ENCODE measurements at regions of chr11 and their contacts with region 1.

Region 1: GRCh38 chr11:36478700-36479329 is 31.3 kb downstream of the TRAF6 start:
- DNase-seq: peak; percentile 76
- ATAC-seq: peak; percentile 56
- H3K4me3 ChIP-seq: no peak overlapping the region
- H3K27ac ChIP-seq: no peak overlapping the region
- H3K4me1 ChIP-seq: no peaks in the 10 kb centered on the region
- H3K27me3 ChIP-seq: no peaks in the 10 kb centered on the region
- CTCF ChIP-seq: peak; percentile 84

Region 2: GRCh38 chr11:36131721-36132397 is 347.0 kb before region 1 on chr11:
- CTCF ChIA-PET with region 1: no interaction called
- POLR2A ChIA-PET with region 1: interaction called, 25 read pairs
- intact Hi-C with region 1: no loop called
- DNase-seq: peak; percentile 29
- ATAC-seq: peak; percentile 69
- H3K4me3 ChIP-seq: no peak overlapping the region
- H3K27ac ChIP-seq: no peak overlapping the region
- H3K4me1 ChIP-seq: peaks cover 11% of the 10 kb centered on the region
- H3K27me3 ChIP-seq: no peaks in the 10 kb centered on the region
- CTCF ChIP-seq: peak; percentile 68

Region 3: GRCh38 chr11:36292311-36292722 is 186.5 kb before region 1 on chr11:
- CTCF ChIA-PET with region 1: interaction called, 11 read pairs
- POLR2A ChIA-PET with region 1: no interaction called
- intact Hi-C with region 1: loop called (anchors 1 kb)
- DNase-seq: peak; percentile 67
- ATAC-seq: no peak
- H3K4me3 ChIP-seq: no peak overlapping the region
- H3K27ac ChIP-seq: no peak overlapping the region
- H3K4me1 ChIP-seq: peaks cover 8% of the 10 kb centered on the region; the same call in 1 of the 2 replicates
- H3K27me3 ChIP-seq: no peaks in the 10 kb centered on the region
- CTCF ChIP-seq: peak; percentile 81

Region 4: DNA sequence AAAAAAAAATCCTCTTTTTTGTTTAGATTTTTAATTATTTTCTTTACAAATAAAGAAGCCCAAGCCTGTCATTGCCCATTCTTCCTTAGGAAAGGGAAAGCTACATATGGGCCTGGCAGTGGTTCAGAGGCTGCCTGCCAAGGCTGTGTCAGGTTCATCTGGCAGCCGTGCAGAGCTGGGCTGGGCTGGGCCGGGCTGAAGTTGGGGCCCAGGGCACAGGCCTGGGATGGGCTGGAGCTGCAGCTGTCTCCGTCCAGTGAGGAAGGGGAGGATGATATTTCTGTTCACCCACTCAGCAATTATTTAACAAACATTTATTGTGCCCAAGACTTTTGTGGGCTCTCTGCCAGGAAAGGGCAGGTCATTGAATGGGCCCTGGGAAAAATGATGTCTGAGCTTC is 178.2 kb before region 1 on chr11:
- CTCF ChIA-PET with region 1: interaction called, 10 read pairs
- POLR2A ChIA-PET with region 1: no interaction called
- intact Hi-C with region 1: no loop called
- DNase-seq: peak; percentile 59
- ATAC-seq: peak; percentile 85
- H3K4me3 ChIP-seq: no peak overlapping the region
- H3K27ac ChIP-seq: no peak overlapping the region
- H3K4me1 ChIP-seq: peaks cover 8% of the 10 kb centered on the region; the same call in 1 of the 2 replicates
- H3K27me3 ChIP-seq: no peaks in the 10 kb centered on the region
- CTCF ChIP-seq: no peak

Region 5: DNA sequence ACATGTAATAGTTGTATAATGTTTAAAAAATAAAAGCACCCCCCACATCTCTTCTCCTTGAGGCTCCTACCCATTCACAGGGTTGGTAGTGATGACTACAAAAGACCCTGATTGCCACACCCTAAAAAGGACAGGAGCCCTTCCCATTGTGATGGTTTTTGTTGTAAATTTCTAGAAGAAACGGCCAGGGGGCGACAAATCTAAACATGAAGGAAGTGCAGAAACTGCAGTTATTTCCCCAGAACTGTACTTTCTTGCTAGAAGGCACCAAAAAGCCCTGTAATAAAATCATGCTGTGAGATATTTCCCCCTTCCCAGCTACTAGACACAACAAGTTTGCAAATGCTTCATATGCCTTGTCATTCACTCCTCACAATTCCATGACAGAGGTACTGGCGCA is 171.9 kb before region 1 on chr11:
- CTCF ChIA-PET with region 1: interaction called, 6 read pairs
- POLR2A ChIA-PET with region 1: no interaction called
- intact Hi-C with region 1: loop called (anchors 1 kb)
- DNase-seq: peak; percentile 57
- ATAC-seq: peak; percentile 37; the same call in 1 of the 2 replicates
- H3K4me3 ChIP-seq: no peak overlapping the region
- H3K27ac ChIP-seq: no peak overlapping the region
- H3K4me1 ChIP-seq: peaks cover 19% of the 10 kb centered on the region
- H3K27me3 ChIP-seq: no peaks in the 10 kb centered on the region
- CTCF ChIP-seq: peak; percentile 70

Region 6: GRCh38 chr11:36398231-36398953 is 80.4 kb before region 1 on chr11:
- CTCF ChIA-PET with region 1: no interaction called
- POLR2A ChIA-PET with region 1: no interaction called
- intact Hi-C with region 1: no loop called
- DNase-seq: no peak
- ATAC-seq: no peak
- H3K4me3 ChIP-seq: no peak overlapping the region
- H3K27ac ChIP-seq: no peak overlapping the region
- H3K4me1 ChIP-seq: no peaks in the 10 kb centered on the region
- H3K27me3 ChIP-seq: no peaks in the 10 kb centered on the region
- CTCF ChIP-seq: no peak

Region 7: DNA sequence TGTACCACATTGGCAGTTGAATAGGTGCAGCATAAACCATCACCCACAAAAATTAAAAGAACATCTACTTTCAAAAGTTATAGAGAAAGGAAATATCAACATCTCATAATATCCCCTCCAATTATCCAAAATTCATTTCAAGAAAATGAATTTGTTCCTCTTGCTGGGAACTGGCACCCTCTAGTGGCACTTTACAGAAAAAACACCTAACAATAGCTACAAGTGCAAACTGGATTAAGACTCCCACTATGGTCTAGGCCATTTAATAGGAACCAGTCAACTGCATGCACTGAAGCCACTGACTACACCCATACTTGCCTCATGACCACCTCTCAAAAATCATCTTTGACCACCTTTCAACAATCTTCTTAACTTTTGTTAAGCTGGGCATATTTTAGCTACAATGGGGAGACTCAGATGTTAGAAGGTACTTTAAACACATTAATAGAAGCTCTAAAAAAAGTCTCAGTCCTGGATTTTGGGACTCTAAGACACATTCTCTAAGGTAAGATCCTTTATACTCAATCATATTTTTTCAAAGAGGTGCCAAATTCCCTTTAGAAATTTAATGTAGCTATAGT is 14.0 kb after region 1 on chr11:
- CTCF ChIA-PET with region 1: interaction called, 17 read pairs
- POLR2A ChIA-PET with region 1: no interaction called
- intact Hi-C with region 1: no loop called
- DNase-seq: peak; percentile 66
- ATAC-seq: peak; percentile 67
- H3K4me3 ChIP-seq: no peak overlapping the region
- H3K27ac ChIP-seq: no peak overlapping the region
- H3K4me1 ChIP-seq: no peaks in the 10 kb centered on the region
- H3K27me3 ChIP-seq: no peaks in the 10 kb centered on the region
- CTCF ChIP-seq: peak; percentile 85